ENCODE measurements at regions of chr14 and their contacts with region 1.

Region 1: DNA sequence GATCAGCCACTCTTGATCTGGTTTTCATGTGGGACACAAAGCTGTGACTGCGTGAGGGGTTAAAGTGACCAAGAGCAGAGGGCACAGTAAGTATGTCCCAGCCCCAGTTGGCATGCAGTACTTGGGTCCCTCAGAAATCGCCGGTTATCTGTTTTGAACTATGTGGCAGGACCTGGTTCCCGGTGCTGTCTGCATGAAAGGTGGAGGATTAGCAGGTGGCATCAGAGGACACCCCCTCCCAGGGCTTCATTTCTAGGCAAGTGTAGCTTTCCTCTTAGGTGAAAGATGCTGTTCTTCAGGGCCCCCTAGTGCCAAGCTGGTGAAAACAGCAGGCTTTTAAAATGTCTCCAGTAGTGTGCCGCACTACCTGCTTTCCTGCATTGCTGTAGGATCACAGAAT is 57.1 kb downstream of the ATG14 start:
- DNase-seq: peak; percentile 21 to 56
- H3K4me3 ChIP-seq: no peak overlapping the region
- H3K27ac ChIP-seq: no peak overlapping the region
- H3K4me1 ChIP-seq: no peaks in the 10 kb centered on the region
- H3K27me3 ChIP-seq: peaks cover 0 to 2% (median 0%) of the 10 kb centered on the region in 4 experiments; a peak in 1 of 7 replicates
- CTCF ChIP-seq: peak; percentile 39 to 89 (median 75)
- EP300 ChIP-seq: no peak
- POLR2A ChIP-seq: no peak
- RAD21 ChIP-seq: peak; percentile 83 to 89

Region 2: GRCh38 chr14:55212634-55213033 is 141.9 kb before region 1 on chr14:
- CTCF ChIA-PET with region 1: interaction called, 27 read pairs
- POLR2A ChIA-PET with region 1: no interaction called
- DNase-seq: no peak
- H3K4me3 ChIP-seq: no peak overlapping the region
- H3K27ac ChIP-seq: peak overlapping the region; percentile 40; the same call in 1 of the 2 replicates
- H3K4me1 ChIP-seq: peaks cover 0 to 3% (median 0%) of the 10 kb centered on the region in 4 experiments; a peak in 1 of 7 replicates
- H3K27me3 ChIP-seq: no peaks in the 10 kb centered on the region
- CTCF ChIP-seq: no peak
- EP300 ChIP-seq: no peak
- POLR2A ChIP-seq: no peak
- RAD21 ChIP-seq: no peak

Region 3: DNA sequence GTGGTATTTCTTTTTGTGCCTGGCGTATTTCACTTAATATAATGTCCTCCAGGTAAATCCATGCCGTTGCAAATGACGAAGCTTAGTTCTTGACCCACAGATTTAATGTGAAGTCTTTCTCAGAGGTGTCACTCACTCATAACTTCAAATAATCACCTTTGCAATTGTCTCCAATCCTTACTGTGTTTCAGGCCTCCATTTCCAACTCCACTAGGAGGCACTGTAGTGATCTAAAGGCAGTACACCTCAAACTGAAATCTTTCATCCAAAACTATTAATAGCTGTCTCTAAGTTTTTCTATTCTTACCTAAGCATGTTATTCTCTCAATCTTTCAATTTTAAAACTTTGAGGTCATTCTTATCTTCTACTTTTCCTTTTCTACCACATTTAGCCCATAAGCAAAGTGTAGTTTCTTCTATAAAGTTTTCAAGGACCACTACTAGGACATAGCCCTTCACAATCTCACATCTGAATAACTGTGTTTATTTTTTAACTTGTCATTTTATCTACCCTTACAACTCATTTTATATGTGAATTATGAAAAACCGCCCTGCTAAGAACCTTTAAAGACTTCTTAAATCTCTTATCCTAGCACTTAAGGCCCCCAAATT is 108.7 kb before region 1 on chr14:
- CTCF ChIA-PET with region 1: interaction called, 24 read pairs
- POLR2A ChIA-PET with region 1: no interaction called
- DNase-seq: no peak
- H3K4me3 ChIP-seq: no peak overlapping the region
- H3K27ac ChIP-seq: no peak overlapping the region
- H3K4me1 ChIP-seq: peaks cover 0 to under 1% (median under 1%) of the 10 kb centered on the region in 4 experiments; a peak in 2 of 7 replicates
- H3K27me3 ChIP-seq: peaks cover 0 to 5% (median 1%) of the 10 kb centered on the region in 4 experiments; a peak in 4 of 7 replicates
- CTCF ChIP-seq: peak in 2 of 3 experiments; percentile 39 to 61; a peak in 2 of 4 replicates
- EP300 ChIP-seq: no peak
- POLR2A ChIP-seq: no peak
- RAD21 ChIP-seq: peak; percentile 42 to 56

Region 4: GRCh38 chr14:55265197-55265596 is 89.3 kb before region 1 on chr14:
- CTCF ChIA-PET with region 1: interaction called, 43 read pairs
- POLR2A ChIA-PET with region 1: no interaction called
- DNase-seq: no peak
- H3K4me3 ChIP-seq: no peak overlapping the region
- H3K27ac ChIP-seq: no peak overlapping the region
- H3K4me1 ChIP-seq: no peaks in the 10 kb centered on the region
- H3K27me3 ChIP-seq: peaks cover 0 to 1% (median 0%) of the 10 kb centered on the region in 4 experiments; a peak in 1 of 7 replicates
- CTCF ChIP-seq: no peak
- EP300 ChIP-seq: no peak
- POLR2A ChIP-seq: no peak
- RAD21 ChIP-seq: no peak

Region 5: GRCh38 chr14:55270832-55271565 is 83.5 kb before region 1 on chr14 and contains the start of gene FBXO34:
- CTCF ChIA-PET with region 1: interaction called, 43 read pairs
- POLR2A ChIA-PET with region 1: interaction called, 4 read pairs
- DNase-seq: peak; percentile 85 to 100
- H3K4me3 ChIP-seq: peak within 1 kb of the TSS; percentile 82 to 100 (median 87)
- H3K27ac ChIP-seq: peak within 1 kb of the TSS; percentile 88; the same call in 1 of the 2 replicates
- H3K4me1 ChIP-seq: peaks cover 0 to 1% (median 0%) of the 10 kb centered on the region in 4 experiments; a peak in 1 of 7 replicates
- H3K27me3 ChIP-seq: peaks cover 0 to 1% (median 0%) of the 10 kb centered on the region in 4 experiments; a peak in 1 of 7 replicates
- CTCF ChIP-seq: peak; percentile 92 to 99 (median 97)
- EP300 ChIP-seq: peak in 1 of 2 experiments; percentile 81; a peak in 1 of 3 replicates
- POLR2A ChIP-seq: peak in 1 of 2 experiments; percentile 82; a peak in 2 of 3 replicates
- RAD21 ChIP-seq: peak; percentile 72 to 74
- total RNA-seq, gene FBXO34: 14.4 and 14.8 TPM in 2 replicates

Region 6: GRCh38 chr14:55277972-55278740 is 76.3 kb before region 1 on chr14:
- CTCF ChIA-PET with region 1: interaction called, 43 read pairs
- POLR2A ChIA-PET with region 1: interaction called, 4 read pairs
- DNase-seq: no peak
- H3K4me3 ChIP-seq: no peak overlapping the region
- H3K27ac ChIP-seq: no peak overlapping the region
- H3K4me1 ChIP-seq: no peaks in the 10 kb centered on the region
- H3K27me3 ChIP-seq: peaks cover 0 to 1% (median 0%) of the 10 kb centered on the region in 4 experiments; a peak in 1 of 7 replicates
- CTCF ChIP-seq: no peak
- EP300 ChIP-seq: no peak
- POLR2A ChIP-seq: no peak
- RAD21 ChIP-seq: no peak

Region 7: DNA sequence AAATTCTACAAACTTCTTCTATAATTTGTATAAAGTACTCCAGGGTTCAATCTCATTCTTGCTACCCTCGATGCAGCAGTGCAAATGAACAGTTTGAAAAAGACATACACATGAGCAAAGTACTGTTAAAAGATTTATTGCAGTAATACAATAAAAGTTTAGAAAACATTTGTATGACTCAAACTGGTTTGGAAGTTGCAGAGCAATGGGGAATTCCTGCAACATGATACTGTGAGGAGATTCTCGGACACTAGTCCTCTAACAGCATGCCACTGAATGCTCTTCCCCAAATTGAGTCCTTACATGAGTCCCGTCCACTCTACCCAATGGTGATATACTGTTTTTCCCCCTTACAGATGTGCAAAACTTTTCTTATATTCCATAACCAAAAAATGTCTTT is 11.8 kb after region 1 on chr14:
- CTCF ChIA-PET with region 1: interaction called, 32 read pairs
- POLR2A ChIA-PET with region 1: interaction called, 6 read pairs
- DNase-seq: no peak
- H3K4me3 ChIP-seq: no peak overlapping the region
- H3K27ac ChIP-seq: no peak overlapping the region
- H3K4me1 ChIP-seq: no peaks in the 10 kb centered on the region
- H3K27me3 ChIP-seq: no peaks in the 10 kb centered on the region
- CTCF ChIP-seq: no peak
- EP300 ChIP-seq: no peak
- POLR2A ChIP-seq: no peak
- RAD21 ChIP-seq: no peak

Region 8: GRCh38 chr14:55488204-55488603 is 133.7 kb after region 1 on chr14:
- CTCF ChIA-PET with region 1: no interaction called
- POLR2A ChIA-PET with region 1: no interaction called
- DNase-seq: no peak
- H3K4me3 ChIP-seq: no peak overlapping the region
- H3K27ac ChIP-seq: no peak overlapping the region
- H3K4me1 ChIP-seq: no peaks in the 10 kb centered on the region
- H3K27me3 ChIP-seq: no peaks in the 10 kb centered on the region
- CTCF ChIP-seq: no peak
- EP300 ChIP-seq: no peak
- POLR2A ChIP-seq: no peak
- RAD21 ChIP-seq: no peak

Measured in H1 (cell line).